Cardiac septum (tissue), 1 donor: ENCODE measurements at regions of chrX and their contacts with region 1.

Region 1: DNA sequence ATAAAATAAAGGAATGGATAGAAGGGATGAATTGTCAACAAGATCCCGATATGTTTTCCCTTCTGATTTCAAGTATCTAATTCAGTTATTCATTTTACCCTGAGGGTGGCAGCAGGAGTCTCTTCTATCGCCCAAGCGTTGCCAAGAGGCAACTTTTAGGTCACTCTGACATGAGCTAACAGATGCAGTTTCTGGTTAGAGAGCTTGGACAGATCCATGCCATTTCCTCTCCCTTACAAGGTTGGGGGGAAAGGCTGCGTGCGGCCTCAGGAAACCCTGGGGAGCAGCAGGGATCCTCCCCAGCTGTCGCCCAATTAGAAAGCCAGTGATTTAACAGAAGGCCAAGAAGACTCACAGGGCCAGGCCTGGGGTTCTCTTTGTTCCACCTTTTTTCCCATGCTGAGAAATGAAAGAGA is 35.3 kb upstream of the WAS start:
- DNase-seq: no peak

Region 2: DNA sequence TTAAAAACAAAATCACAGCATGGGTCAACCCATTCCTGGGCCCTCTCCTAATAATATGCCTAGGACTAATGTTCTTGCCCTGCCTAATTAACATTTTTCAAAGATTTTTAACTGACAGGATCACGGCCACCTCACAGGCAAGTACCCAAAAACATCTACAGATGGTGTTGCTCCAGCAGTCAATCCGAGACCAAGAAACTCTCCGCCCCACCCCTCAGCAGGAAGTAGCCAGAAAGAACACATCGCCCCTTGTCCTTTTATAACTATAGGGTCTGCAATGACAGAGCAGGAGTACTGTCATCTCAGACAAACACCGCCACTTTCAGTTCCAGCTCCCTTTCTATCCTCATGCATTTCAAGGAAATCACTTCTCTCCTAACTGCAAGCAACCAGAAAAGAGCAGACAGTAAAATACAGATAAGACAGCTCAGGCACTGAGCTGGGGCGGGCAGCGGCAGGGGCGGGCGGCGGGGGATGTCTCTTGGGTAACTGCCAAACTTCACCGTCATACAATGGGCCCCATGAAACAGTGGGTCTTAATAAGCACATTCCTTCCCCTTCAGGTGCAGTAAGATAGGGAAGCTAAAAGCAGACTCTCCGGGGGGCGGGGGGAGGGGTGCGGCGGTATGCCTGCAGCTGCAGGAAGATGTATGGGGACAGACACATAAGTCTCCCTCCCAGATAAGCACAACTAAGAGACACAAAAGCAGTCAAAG is 712.0 kb before region 1 on chrX:
- intact Hi-C with region 1: no loop called
- DNase-seq: no peak

Region 3: GRCh38 chrX:48789366-48790220 is 141.2 kb after region 1 on chrX:
- intact Hi-C with region 1: no loop called
- DNase-seq: no peak

Region 4: GRCh38 chrX:48917139-48918001 is 269.0 kb after region 1 on chrX:
- intact Hi-C with region 1: loop called (anchors 10 kb)
- DNase-seq: peak; percentile 94

Region 5: GRCh38 chrX:48945516-48946348 is 297.4 kb after region 1 on chrX:
- intact Hi-C with region 1: loop called (anchors 10 kb)
- DNase-seq: no peak

Region 6: DNA sequence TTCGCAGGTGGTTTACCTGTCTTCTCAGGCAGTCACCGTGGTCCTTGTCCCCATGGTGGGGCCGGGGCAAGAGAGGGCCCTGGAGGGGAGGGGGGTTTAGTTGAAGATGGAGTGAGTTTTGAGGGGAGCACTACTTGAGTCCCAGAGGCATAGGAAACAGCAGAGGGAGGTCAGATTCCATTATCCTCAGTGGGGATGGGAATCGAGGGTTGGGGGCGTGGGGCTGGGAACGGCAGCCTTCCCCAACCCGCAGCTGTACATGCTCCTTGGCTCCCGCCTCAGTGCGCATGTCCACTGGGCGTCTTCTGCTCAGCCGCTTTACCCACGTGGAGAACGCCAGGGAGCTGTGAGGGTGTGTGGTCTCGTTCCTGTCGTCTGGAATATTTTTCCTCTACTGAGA is 655.0 kb after region 1 on chrX and contains the start of gene GAGE10:
- intact Hi-C with region 1: no loop called
- DNase-seq: no peak
- total RNA-seq, gene GAGE10: not detected